HCT116 (cell line): ENCODE measurements at regions of chr22 and their contacts with region 1.

Region 1: GRCh38 chr22:18001040-18001893 is 23.1 kb downstream of the MICAL3 start:
- DNase-seq: peak; percentile 99
- ATAC-seq: peak; percentile 89
- H3K4me3 ChIP-seq: peak overlapping the region; percentile 66 to 84
- H3K27ac ChIP-seq: peak overlapping the region; percentile 85
- H3K4me1 ChIP-seq: peaks cover 29 to 42% of the 10 kb centered on the region in 2 experiments
- H3K27me3 ChIP-seq: no peaks in the 10 kb centered on the region
- CTCF ChIP-seq: peak; percentile 3 to 36 (median 28); a peak in 2 of 6 replicates
- POLR2A ChIP-seq: peak; percentile 91
- RAD21 ChIP-seq: no peak

Region 2: GRCh38 chr22:18023509-18024275 is 22.4 kb after region 1 on chr22:
- CTCF ChIA-PET with region 1: no interaction called
- POLR2A ChIA-PET with region 1: interaction called, 3 read pairs
- RAD21 ChIA-PET with region 1: no interaction called
- intact Hi-C with region 1: loop called (anchors 1 kb)
- DNase-seq: peak; percentile 65
- ATAC-seq: peak; percentile 86
- H3K4me3 ChIP-seq: peak overlapping the region; percentile 76 to 80
- H3K27ac ChIP-seq: peak overlapping the region; percentile 85
- H3K4me1 ChIP-seq: peaks cover 8 to 32% of the 10 kb centered on the region in 2 experiments
- H3K27me3 ChIP-seq: no peaks in the 10 kb centered on the region
- CTCF ChIP-seq: no peak
- POLR2A ChIP-seq: no peak
- RAD21 ChIP-seq: no peak